ENCODE measurements at regions of chr1 and their contacts with region 1.

Region 1: GRCh38 chr1:205631727-205632373 is at the start of gene ELK4:
- DNase-seq: peak; percentile 90 to 98
- H3K4me3 ChIP-seq: peak within 1 kb of the TSS; percentile 92
- H3K27ac ChIP-seq: peak within 1 kb of the TSS; percentile 84
- H3K4me1 ChIP-seq: peaks cover 22% of the 10 kb centered on the region
- H3K27me3 ChIP-seq: no peaks in the 10 kb centered on the region
- CTCF ChIP-seq: peak; percentile 63
- total RNA-seq, gene ELK4: 40.3 and 48.1 TPM in 2 replicates

Region 2: DNA sequence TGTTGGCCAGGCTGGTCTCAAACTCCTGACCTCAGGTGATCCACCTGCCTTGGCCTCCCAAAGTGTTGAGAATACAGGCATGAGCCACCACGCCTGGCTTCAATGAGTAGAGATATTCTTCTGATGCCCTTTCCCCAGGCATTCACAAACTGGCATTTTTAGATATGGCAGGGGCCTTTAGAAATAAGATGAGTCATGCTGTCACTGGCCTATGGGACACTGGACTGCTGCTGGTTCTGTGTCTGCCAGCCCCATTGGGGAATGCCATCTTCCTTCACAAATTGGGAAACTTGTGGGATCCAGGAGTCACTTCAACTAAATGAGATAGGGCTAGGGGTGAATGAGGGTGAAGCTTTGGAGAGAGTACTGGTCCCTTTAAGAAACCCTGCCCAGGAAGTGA is 291.2 kb before region 1 on chr1:
- CTCF ChIA-PET with region 1: no interaction called
- POLR2A ChIA-PET with region 1: interaction called, 14 read pairs
- intact Hi-C with region 1: no loop called
- DNase-seq: no peak
- H3K4me3 ChIP-seq: no peak overlapping the region
- H3K27ac ChIP-seq: no peak overlapping the region
- H3K4me1 ChIP-seq: peaks cover 8% of the 10 kb centered on the region
- H3K27me3 ChIP-seq: peaks cover 13% of the 10 kb centered on the region
- CTCF ChIP-seq: no peak

Region 3: GRCh38 chr1:205346956-205347576 is 284.8 kb before region 1 on chr1:
- CTCF ChIA-PET with region 1: no interaction called
- POLR2A ChIA-PET with region 1: interaction called, 13 read pairs
- intact Hi-C with region 1: no loop called
- DNase-seq: peak in 1 of 2 experiments; percentile 61
- H3K4me3 ChIP-seq: no peak overlapping the region
- H3K27ac ChIP-seq: no peak overlapping the region
- H3K4me1 ChIP-seq: no peaks in the 10 kb centered on the region
- H3K27me3 ChIP-seq: peaks cover 13% of the 10 kb centered on the region
- CTCF ChIP-seq: no peak

Region 4: GRCh38 chr1:205600085-205600484 is 31.8 kb before region 1 on chr1:
- CTCF ChIA-PET with region 1: no interaction called
- POLR2A ChIA-PET with region 1: no interaction called
- intact Hi-C with region 1: no loop called
- DNase-seq: no peak
- H3K4me3 ChIP-seq: no peak overlapping the region
- H3K27ac ChIP-seq: no peak overlapping the region
- H3K4me1 ChIP-seq: no peaks in the 10 kb centered on the region
- H3K27me3 ChIP-seq: no peaks in the 10 kb centered on the region
- CTCF ChIP-seq: no peak